BJ (cell line): ENCODE measurements at regions of chr14 and their contacts with region 1.

Region 1: DNA sequence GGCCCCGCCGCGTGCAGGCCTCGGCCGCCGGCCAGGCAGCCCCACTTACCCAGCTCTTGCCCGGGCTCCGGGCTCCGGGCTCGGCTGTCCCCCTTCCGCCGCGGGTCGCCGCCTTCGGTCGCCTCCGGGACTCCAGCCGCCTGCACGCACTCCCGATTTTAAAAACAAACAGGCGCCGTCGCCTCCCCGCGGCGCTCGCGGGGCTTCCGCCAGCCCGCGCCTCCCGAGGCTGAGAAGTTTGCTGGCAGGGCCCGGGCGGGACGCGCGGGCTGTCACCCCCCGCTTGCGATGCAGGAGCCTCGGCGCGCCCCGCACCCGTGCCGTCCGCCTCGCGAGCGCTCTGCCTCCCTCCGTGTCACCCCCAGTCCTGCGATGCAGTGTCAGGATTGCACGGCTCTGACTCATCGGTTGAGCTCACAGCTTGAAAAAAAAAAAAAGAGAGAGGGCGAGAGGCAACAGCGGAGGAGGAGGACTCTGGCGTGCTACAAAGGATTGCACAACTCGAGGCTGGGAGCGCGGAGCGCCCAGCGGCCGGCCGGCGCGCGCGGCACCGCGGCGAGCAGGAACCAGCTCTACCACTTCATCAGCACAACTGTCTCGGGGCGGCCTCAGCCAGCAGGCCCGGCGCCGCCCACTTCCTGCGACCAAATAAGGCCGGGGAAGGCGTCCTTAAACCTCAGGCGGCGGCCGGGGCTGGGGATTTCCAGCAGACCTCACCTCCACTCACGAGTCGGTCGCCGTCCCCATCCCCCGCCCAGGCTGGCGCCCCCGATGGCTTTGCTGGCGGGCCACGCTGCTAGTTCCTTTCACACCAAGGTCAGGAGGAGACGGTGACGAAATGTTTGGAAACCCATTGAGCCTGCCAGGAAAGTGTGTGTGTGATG is 45.8 kb upstream of the PNMA1 start:
- DNase-seq: peak; percentile 98
- H3K4me3 ChIP-seq: peak overlapping the region; percentile 69
- H3K27me3 ChIP-seq: no peaks in the 10 kb centered on the region
- CTCF ChIP-seq: no peak

Region 2: GRCh38 chr14:73633116-73634010 is 126.6 kb before region 1 on chr14:
- CTCF ChIA-PET with region 1: no interaction called
- POLR2A ChIA-PET with region 1: no interaction called
- DNase-seq: peak; percentile 9
- H3K4me3 ChIP-seq: peak overlapping the region; percentile 28
- H3K27me3 ChIP-seq: no peaks in the 10 kb centered on the region
- CTCF ChIP-seq: peak; percentile 86

Region 3: GRCh38 chr14:73709896-73710469 is 50.0 kb before region 1 on chr14:
- CTCF ChIA-PET with region 1: no interaction called
- POLR2A ChIA-PET with region 1: no interaction called
- DNase-seq: no peak
- H3K4me3 ChIP-seq: no peak overlapping the region
- H3K27me3 ChIP-seq: no peaks in the 10 kb centered on the region
- CTCF ChIP-seq: no peak

Region 4: DNA sequence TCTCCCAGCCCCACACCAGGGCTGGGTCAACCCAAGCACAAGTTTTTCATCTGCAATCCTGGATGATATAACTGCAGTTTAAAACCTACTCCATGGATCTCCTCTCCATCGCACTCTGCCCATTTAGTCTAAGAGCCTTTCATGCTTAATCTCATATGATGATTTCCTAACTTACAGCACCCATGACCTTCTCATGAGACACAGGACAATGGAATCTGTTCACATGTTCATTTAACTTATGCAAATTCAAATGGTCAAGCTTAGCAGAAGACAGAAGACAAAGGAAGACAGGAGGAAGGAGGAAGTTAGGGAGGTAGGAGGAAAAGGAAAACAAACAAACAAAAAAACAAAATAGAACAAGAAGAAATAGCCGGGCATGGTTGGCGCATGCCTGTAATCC is 18.8 kb after region 1 on chr14:
- CTCF ChIA-PET with region 1: interaction called, 7 read pairs
- POLR2A ChIA-PET with region 1: interaction called, 10 read pairs
- DNase-seq: no peak
- H3K4me3 ChIP-seq: no peak overlapping the region
- H3K27me3 ChIP-seq: no peaks in the 10 kb centered on the region
- CTCF ChIP-seq: no peak

Region 5: GRCh38 chr14:73785873-73786695 is 26.1 kb after region 1 on chr14:
- CTCF ChIA-PET with region 1: interaction called, 23 read pairs
- POLR2A ChIA-PET with region 1: interaction called, 4 read pairs
- DNase-seq: peak; percentile 56
- H3K4me3 ChIP-seq: peak overlapping the region; percentile 57
- H3K27me3 ChIP-seq: no peaks in the 10 kb centered on the region
- CTCF ChIP-seq: peak; percentile 42

Region 6: GRCh38 chr14:73895939-73896338 is 136.0 kb after region 1 on chr14:
- CTCF ChIA-PET with region 1: no interaction called
- POLR2A ChIA-PET with region 1: interaction called, 11 read pairs
- DNase-seq: no peak
- H3K4me3 ChIP-seq: no peak overlapping the region
- H3K27me3 ChIP-seq: no peaks in the 10 kb centered on the region
- CTCF ChIP-seq: no peak